Left colon (tissue), 2 donors: ENCODE measurements at regions of chr4 and their contacts with region 1.

Region 1: DNA sequence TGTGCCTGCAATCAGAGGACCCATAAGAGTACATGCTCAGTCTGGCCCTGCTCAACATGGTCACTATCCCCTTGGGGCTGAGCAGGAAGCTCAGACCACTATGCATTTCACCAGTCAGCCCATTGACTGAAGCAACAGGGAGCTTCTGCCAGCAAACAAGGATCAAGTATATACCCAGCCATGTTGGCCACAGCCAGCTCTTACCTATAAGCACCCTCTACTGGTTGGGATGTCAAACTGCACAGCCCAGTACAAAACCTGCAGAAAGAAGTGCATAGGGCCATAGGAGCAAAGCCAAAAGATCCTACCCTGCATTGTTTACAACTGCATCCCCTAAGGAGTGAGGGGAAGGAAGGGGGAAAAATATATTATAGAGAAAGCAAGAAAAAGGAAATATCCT is 214.4 kb upstream of the CPEB2 start:
- DNase-seq: no peak
- ATAC-seq: peak; percentile 66

Region 2: DNA sequence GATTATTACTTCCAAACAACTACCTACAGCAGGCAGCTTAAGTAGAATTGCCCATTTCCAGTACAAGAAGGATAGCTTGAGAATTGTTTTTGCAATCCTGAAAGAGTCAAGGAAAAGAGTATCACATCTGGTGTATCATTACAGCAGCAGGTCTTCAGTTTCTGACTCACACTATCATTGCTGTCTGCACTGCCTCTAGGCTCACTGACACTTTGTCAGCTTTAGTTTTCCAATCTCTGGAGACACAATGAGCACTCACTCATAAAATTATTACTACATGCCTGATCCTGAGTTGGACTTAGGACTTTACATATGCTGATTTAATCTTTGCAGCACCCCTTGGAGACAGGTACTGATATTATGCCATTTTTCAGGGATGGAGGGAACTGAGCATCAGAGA is 915.7 kb before region 1 on chr4:
- intact Hi-C with region 1: loop called in 1 of 2 experiments (anchors 10 kb)
- DNase-seq: no peak
- ATAC-seq: peak; percentile 31

Region 3: DNA sequence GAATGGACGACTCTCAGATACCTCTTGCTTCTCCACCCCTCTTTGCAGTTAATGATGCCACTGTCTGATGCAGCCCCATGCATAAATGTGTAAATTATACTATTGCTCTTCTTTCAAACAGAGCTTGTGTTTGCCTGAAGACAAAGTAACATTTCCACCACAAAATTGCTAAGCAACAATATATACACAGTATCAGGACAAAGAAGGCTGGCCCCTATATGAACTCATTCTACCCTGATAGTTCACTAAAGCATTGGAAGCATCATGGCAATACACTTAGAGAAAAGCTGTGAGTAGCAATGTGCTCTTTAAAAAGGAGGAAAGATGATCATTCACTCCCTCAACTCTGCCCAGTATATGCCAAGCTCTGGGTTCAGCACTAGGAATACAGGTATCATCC is 212.6 kb before region 1 on chr4:
- intact Hi-C with region 1: no loop called
- DNase-seq: no peak
- ATAC-seq: no peak